ENCODE measurements at regions of chr6 and their contacts with region 1.

Region 1: DNA sequence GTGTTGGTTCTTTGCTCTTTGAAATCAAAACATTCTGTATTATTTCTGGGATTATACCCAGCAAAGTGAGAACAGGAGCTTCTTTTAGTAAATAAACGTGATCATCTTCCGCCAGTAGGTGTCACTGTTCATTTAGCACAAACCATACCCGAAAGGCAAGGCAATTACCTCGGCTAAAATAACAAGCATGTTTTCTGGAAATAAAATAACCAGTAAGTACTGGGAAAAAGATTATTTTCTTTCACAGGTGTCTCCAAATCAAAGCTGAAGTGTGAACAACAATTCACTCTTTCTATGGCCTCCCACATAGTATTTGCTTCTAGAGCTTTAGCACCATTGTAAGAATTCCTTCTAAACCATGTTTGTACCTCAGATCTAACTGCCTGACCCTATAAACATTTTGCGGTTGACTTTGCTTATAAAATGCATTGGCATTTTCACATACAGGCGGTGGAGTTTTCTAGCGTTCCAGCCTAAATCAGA is 144.6 kb upstream of the AGPAT4 start:
- ATAC-seq: peak in 7 of 8 experiments; percentile 44 to 87 (median 65)
- H3K4me3 ChIP-seq: no peak overlapping the region
- H3K27ac ChIP-seq: no peak overlapping the region
- H3K4me1 ChIP-seq: peaks cover 24 to 27% of the 10 kb centered on the region in 2 donors

Region 2: DNA sequence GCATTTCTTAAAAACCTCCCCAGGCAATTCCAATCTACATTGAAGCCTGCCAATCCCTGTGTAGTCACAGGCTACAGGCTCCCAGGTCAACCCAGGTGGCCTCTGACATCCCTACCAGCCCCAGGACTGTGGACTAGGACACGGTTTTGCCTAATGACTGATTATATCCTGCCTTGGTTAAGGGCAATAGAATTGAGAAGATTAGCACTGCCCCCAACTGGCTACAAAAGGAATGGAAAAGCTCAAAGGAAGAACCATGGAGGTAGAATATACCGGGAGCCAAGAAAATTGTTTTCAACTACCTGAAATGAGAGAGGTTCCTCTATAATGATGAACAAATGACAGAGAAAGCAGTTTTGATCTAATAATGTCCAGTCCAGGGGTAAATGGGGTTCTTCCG is 276.5 kb after region 1 on chr6:
- in situ Hi-C with region 1: loop called in 2 of 9 experiments (anchors 25 kb)
- ATAC-seq: peak in 3 of 8 experiments; percentile 66 to 73 (median 72)
- H3K4me3 ChIP-seq: no peak overlapping the region
- H3K27ac ChIP-seq: no peak overlapping the region
- H3K4me1 ChIP-seq: peaks cover 8 to 13% of the 10 kb centered on the region in 2 donors

Region 3: DNA sequence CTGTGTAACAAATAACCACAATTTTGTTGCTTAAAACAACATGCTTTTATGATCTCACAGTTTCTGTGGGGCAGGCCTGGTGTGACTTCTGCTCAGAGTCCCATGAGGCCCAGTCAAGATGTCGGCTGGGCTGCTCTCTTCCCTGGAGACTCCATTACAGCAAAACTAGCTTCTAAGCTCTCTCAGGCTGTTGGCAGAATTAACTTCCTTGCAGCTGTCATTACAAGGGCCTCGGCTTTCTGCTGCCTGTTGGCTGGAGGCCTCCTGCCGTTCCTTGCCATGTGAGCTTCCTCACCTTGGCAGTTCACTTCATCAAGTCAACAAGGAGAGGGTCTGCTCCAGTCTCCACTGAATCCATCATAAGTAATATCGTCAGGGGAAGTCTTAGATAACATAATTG is 649.8 kb after region 1 on chr6:
- in situ Hi-C with region 1: no loop called
- ATAC-seq: no peak
- H3K4me3 ChIP-seq: no peak overlapping the region
- H3K27ac ChIP-seq: no peak overlapping the region
- H3K4me1 ChIP-seq: no peaks in the 10 kb centered on the region

Measured in motor neuron (in vitro differentiated cells).